HAP-1 (cell line): ENCODE measurements at regions of chr17 and their contacts with region 1.

Region 1: DNA sequence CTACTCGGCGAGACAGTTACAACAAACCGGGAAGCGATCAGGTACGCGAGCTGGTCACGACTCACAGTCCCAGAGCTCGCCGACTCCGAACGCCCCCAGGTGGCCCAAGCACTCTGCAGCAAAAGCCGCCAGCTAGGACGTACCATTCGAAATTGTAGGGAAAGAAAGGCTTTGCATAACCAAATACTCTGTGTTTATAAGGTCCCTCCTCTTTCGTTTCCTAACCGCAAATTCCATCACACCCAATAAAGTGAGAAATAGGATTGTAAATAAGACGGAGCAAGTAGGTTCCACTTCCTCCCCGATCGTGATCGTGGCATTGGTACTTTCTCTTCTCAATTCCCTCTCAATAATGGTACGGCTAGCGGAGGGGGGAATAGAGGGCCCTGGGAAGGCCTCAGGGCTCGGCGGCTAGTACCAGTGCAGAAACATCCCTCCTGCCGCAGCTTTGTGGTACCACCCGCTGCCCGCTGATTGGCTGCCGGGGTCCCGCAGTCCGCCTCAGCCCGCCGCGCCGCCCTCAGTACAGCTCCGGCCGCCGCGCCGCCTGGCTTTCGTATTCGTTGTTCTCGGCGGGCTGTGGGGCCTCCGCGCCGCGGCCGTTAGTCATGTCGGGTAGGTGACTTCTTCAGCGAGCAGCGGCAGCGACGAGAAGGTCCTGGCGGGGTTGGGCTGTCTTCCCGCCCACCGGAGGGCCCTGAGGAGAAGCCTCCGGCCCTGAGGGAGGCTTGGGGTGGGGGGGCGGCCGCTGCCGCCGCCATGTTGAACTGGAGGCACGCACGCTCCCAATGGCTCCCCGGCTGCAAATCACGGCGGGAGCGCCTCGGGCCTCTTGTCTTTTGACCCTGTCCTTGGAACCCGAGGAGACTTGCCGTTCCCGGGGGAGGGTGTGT is at the start of gene TAF15:
- DNase-seq: peak; percentile 97 to 98
- H3K4me3 ChIP-seq: peak within 1 kb of the TSS; percentile 99
- H3K4me1 ChIP-seq: peaks cover 20% of the 10 kb centered on the region
- H3K27me3 ChIP-seq: no peaks in the 10 kb centered on the region

Region 2: GRCh38 chr17:35764123-35764991 is 44.9 kb before region 1 on chr17:
- in situ Hi-C with region 1: loop called (anchors 5 kb)
- DNase-seq: peak; percentile 90 to 92
- H3K4me3 ChIP-seq: peak overlapping the region; percentile 42
- H3K4me1 ChIP-seq: no peaks in the 10 kb centered on the region
- H3K27me3 ChIP-seq: no peaks in the 10 kb centered on the region